HCT116 (cell line): ENCODE measurements at regions of chr7 and their contacts with region 1.

Region 1: GRCh38 chr7:127598318-127598717 is 4.8 kb downstream of the FSCN3 start:
- DNase-seq: peak; percentile 49
- ATAC-seq: peak; percentile 97
- H3K4me3 ChIP-seq: no peak overlapping the region
- H3K27ac ChIP-seq: no peak overlapping the region
- H3K4me1 ChIP-seq: peaks cover 0 to 5% of the 10 kb centered on the region in 2 experiments; a peak in 2 of 4 replicates
- H3K27me3 ChIP-seq: peaks cover 5% of the 10 kb centered on the region; the same call in 1 of the 2 replicates
- CTCF ChIP-seq: peak; percentile 91 to 99 (median 97)
- POLR2A ChIP-seq: no peak
- RAD21 ChIP-seq: peak; percentile 75

Region 2: GRCh38 chr7:127629268-127629854 is 31.0 kb after region 1 on chr7:
- CTCF ChIA-PET with region 1: interaction called, 3 read pairs
- POLR2A ChIA-PET with region 1: no interaction called
- RAD21 ChIA-PET with region 1: no interaction called
- intact Hi-C with region 1: loop called (anchors 2 kb)
- DNase-seq: peak; percentile 50
- ATAC-seq: peak; percentile 97
- H3K4me3 ChIP-seq: no peak overlapping the region
- H3K27ac ChIP-seq: no peak overlapping the region
- H3K4me1 ChIP-seq: peaks cover 2 to 9% of the 10 kb centered on the region in 2 experiments; a peak in 2 of 4 replicates
- H3K27me3 ChIP-seq: no peaks in the 10 kb centered on the region; the same call in 1 of the 2 replicates
- CTCF ChIP-seq: peak; percentile 72 to 95 (median 85); a peak in 5 of 6 replicates
- POLR2A ChIP-seq: no peak
- RAD21 ChIP-seq: peak; percentile 66